Posterior vena cava (tissue), 2 donors: ENCODE measurements at regions of chr7 and their contacts with region 1.

Region 1: GRCh38 chr7:51732951-51733350 is 416.3 kb upstream of the COBL start:
- DNase-seq: no peak

Region 2: DNA sequence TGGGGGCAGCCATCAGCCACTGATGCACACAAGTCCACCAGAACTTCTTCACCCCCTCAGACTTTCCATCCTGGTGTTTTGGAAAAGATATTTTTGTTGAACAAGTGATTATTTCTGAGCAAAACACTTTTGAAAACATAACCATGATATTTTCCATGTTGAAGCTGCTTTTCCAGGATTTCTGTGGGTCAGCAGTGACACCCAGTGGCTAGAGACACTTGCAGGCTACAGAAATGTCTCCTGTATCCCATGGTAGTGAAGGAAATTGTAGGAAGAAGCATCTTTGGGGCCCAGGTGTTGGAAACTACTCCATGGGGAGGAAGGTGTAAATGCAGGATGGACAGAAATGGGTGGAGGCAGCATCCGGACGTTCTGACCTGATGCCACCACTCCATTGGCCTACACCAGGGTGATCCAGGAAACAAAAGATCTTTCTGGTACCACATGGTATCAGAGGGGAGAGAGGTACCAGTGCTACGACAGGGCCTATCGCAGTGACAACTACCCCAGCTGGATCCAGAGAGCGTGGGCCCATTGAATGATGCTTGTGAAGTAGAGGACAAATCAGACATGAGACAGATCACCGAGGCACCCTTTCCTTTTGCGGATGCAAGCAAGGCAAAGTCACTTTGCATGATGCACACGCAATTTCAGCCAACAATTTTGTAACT is 304.6 kb before region 1 on chr7:
- intact Hi-C with region 1: loop called in 1 of 2 experiments (anchors 5 kb)
- DNase-seq: no peak

Region 3: DNA sequence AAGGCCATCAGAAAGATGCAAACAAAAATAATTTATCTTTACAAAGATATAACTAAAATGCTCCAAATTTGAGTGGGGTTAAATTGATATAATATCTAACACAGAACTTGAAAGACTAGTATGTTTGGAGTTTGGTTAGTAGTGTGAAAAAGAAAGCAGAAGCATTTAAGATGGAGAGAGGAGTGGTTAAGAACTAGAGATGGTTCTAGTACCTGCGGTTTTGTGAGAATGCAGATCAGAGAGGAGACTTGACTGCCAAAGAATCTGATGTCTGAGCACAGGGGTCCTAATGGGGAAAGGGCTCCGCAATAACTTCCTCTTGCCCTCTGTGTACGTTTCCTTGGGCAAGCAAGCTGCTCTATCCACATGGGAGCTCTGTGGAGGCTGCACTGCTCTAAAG is 90.5 kb after region 1 on chr7:
- intact Hi-C with region 1: loop called in 1 of 2 experiments (anchors 5 kb)
- DNase-seq: no peak